IMR-90 (cell line): ENCODE measurements at regions of chr2 and their contacts with region 1.

Region 1: DNA sequence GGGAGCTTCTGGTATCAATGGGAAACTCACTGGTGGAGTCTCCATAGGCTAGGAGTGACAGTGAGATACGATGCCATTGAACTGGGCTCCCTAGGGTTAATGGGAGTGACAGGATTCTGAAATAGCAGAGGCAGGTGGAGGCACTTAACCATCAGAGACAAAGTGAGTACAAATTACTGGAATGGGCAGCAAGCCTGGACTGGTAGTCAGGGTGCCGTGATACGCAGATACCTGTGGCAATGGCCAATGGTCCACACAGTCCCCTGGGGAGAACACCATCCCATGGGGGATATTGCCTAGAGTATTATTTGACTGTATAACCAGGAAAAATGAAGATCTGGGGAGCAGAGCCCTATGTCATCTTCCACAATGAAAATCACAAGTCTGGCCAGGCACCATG is 17.3 kb downstream of the CHCHD5 start:
- DNase-seq: no peak
- ATAC-seq: no peak
- H3K4me3 ChIP-seq: no peak overlapping the region
- H3K27ac ChIP-seq: no peak overlapping the region
- H3K4me1 ChIP-seq: peaks cover 9% of the 10 kb centered on the region
- H3K27me3 ChIP-seq: no peaks in the 10 kb centered on the region
- CTCF ChIP-seq: no peak
- POLR2A ChIP-seq: no peak
- RAD21 ChIP-seq: no peak

Region 2: DNA sequence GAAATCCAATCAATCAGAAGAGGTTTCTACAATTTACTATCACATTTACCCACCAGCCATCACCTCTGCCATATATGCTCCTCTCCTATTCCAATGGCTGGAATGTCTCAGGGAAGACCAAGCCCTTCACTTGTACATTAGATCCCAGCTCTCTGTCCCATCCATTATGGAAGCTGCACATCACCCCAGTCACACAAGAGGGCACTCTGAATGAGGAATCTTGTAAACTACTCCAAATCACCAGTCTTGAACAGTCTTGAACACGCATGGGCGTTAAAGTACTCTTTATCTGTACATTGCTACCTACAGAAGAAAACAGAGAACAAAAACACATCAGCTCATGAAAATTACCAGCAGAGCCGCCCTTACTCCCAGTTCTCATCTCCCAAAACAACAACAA is 385.6 kb before region 1 on chr2:
- CTCF ChIA-PET with region 1: no interaction called
- POLR2A ChIA-PET with region 1: no interaction called
- dilution Hi-C with region 1: no loop called
- in situ Hi-C with region 1: no loop called
- intact Hi-C with region 1: no loop called
- DNase-seq: peak; percentile 18
- ATAC-seq: peak; percentile 59; the same call in 1 of the 2 replicates
- H3K4me3 ChIP-seq: no peak overlapping the region
- H3K27ac ChIP-seq: no peak overlapping the region
- H3K4me1 ChIP-seq: no peaks in the 10 kb centered on the region
- H3K27me3 ChIP-seq: no peaks in the 10 kb centered on the region
- CTCF ChIP-seq: no peak; the same call in 1 of the 2 replicates
- POLR2A ChIP-seq: no peak
- RAD21 ChIP-seq: no peak

Region 3: DNA sequence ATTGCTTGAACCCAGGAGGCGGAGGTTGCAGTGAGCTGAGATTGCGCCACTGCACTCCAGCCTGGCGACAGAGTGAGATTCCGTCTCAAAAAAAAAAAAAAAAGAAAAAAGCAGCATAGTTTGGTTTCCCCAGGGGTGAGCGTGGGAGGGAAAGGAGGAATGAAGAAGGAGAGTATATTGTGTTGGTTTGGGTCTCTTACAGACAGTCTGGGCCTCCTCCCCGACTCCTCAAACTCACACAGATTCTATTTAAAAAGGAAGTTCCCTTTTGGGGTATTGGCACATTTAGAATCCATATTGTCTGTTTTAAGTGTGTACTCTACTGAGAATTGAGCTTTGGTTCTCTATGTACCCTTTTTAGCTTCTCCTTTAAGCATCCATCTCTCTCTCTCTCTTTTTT is 16.6 kb after region 1 on chr2:
- CTCF ChIA-PET with region 1: interaction called, 3 read pairs
- POLR2A ChIA-PET with region 1: interaction called, 17 read pairs
- dilution Hi-C with region 1: no loop called
- in situ Hi-C with region 1: no loop called
- intact Hi-C with region 1: no loop called
- DNase-seq: no peak
- ATAC-seq: no peak
- H3K4me3 ChIP-seq: no peak overlapping the region
- H3K27ac ChIP-seq: no peak overlapping the region
- H3K4me1 ChIP-seq: peaks cover 7% of the 10 kb centered on the region
- H3K27me3 ChIP-seq: peaks cover 5% of the 10 kb centered on the region
- CTCF ChIP-seq: no peak
- POLR2A ChIP-seq: no peak
- RAD21 ChIP-seq: no peak

Region 4: GRCh38 chr2:112645310-112646101 is 43.8 kb after region 1 on chr2 and contains the start of gene SLC20A1:
- CTCF ChIA-PET with region 1: interaction called, 3 read pairs
- POLR2A ChIA-PET with region 1: no interaction called
- dilution Hi-C with region 1: no loop called
- in situ Hi-C with region 1: no loop called
- intact Hi-C with region 1: loop called (anchors 2 kb)
- DNase-seq: peak; percentile 88
- ATAC-seq: peak; percentile 92
- H3K4me3 ChIP-seq: peak within 1 kb of the TSS; percentile 91
- H3K27ac ChIP-seq: peak within 1 kb of the TSS; percentile 93
- H3K4me1 ChIP-seq: peaks cover 15% of the 10 kb centered on the region
- H3K27me3 ChIP-seq: no peaks in the 10 kb centered on the region
- CTCF ChIP-seq: peak; percentile 33; the same call in 1 of the 2 replicates
- POLR2A ChIP-seq: peak; percentile 99
- RAD21 ChIP-seq: peak; percentile 23
- total RNA-seq, gene SLC20A1: 94.1 and 123 TPM in 2 replicates

Region 5: DNA sequence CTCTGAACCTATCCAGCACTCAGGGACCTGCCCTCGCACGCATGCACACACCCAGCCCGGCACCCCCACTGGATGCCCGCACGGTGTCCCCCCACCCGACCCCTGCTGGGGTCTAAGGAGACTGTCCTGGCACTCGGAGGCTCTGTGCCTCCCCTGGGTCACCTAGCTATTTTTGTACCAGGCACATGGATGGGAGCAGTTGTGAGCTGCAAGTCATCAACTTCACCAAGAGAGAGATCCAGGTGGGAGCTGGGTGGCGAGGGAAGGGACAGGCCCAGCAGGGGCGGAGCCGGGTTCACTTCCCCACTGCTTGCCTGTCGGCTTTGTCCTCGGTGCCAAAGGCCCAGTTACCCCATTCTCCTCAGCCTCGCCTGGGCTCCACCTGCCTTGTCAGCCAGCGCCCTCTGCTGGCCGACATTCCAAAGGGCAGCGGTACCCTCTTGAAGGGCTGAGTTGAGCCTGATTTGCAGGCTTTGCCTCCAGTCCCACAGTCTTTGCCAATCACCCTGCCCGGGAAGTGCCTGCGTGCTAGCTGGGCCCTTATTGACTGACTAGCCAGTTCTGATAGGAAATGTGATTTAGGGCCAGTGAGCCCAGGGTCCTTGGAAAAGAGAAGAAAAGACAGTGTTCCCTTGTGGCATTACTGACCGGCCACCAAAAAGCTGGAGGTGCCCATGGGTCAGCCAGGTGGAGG is 124.9 kb after region 1 on chr2:
- CTCF ChIA-PET with region 1: interaction called, 21 read pairs
- POLR2A ChIA-PET with region 1: no interaction called
- dilution Hi-C with region 1: no loop called
- in situ Hi-C with region 1: loop called (anchors 5 kb)
- intact Hi-C with region 1: loop called (anchors 1 kb)
- DNase-seq: peak; percentile 86
- ATAC-seq: peak; percentile 96
- H3K4me3 ChIP-seq: no peak overlapping the region
- H3K27ac ChIP-seq: no peak overlapping the region
- H3K4me1 ChIP-seq: peaks cover 1% of the 10 kb centered on the region; the same call in 1 of the 2 replicates
- H3K27me3 ChIP-seq: no peaks in the 10 kb centered on the region
- CTCF ChIP-seq: peak; percentile 99
- POLR2A ChIP-seq: peak; percentile 49; the same call in 1 of the 2 replicates
- RAD21 ChIP-seq: peak; percentile 100

Region 6: GRCh38 chr2:112958428-112959108 is 356.8 kb after region 1 on chr2:
- CTCF ChIA-PET with region 1: interaction called, 5 read pairs
- POLR2A ChIA-PET with region 1: no interaction called
- dilution Hi-C with region 1: no loop called
- in situ Hi-C with region 1: loop called (anchors 5 kb)
- intact Hi-C with region 1: no loop called
- DNase-seq: peak; percentile 57
- ATAC-seq: peak; percentile 97
- H3K4me3 ChIP-seq: no peak overlapping the region
- H3K27ac ChIP-seq: no peak overlapping the region
- H3K4me1 ChIP-seq: no peaks in the 10 kb centered on the region
- H3K27me3 ChIP-seq: peaks cover 35% of the 10 kb centered on the region
- CTCF ChIP-seq: peak; percentile 72
- POLR2A ChIP-seq: no peak
- RAD21 ChIP-seq: peak; percentile 64